SK-N-SH (cell line): ENCODE measurements at regions of chr15 and their contacts with region 1.

Region 1: GRCh38 chr15:92808978-92809879 is 90.9 kb upstream of the CHD2 start:
- DNase-seq: peak; percentile 94
- H3K4me3 ChIP-seq: peak overlapping the region; percentile 40 to 41; a peak in 3 of 4 replicates
- H3K27ac ChIP-seq: peak overlapping the region; percentile 81 to 88
- H3K4me1 ChIP-seq: no peaks in the 10 kb centered on the region; a peak in 1 of 4 replicates
- H3K27me3 ChIP-seq: no peaks in the 10 kb centered on the region
- CTCF ChIP-seq: peak; percentile 77
- EP300 ChIP-seq: peak; percentile 18 to 20; a peak in 2 of 4 replicates
- RAD21 ChIP-seq: peak; percentile 78

Region 2: GRCh38 chr15:92820236-92821021 is 11.2 kb after region 1 on chr15:
- CTCF ChIA-PET with region 1: interaction called, 41 read pairs
- POLR2A ChIA-PET with region 1: interaction called, 27 read pairs
- DNase-seq: peak; percentile 96
- H3K4me3 ChIP-seq: peak overlapping the region; percentile 38 to 58
- H3K27ac ChIP-seq: peak overlapping the region; percentile 78 to 98
- H3K4me1 ChIP-seq: peaks cover 21 to 40% of the 10 kb centered on the region in 2 experiments
- H3K27me3 ChIP-seq: no peaks in the 10 kb centered on the region
- CTCF ChIP-seq: no peak
- EP300 ChIP-seq: peak; percentile 32 to 35; a peak in 2 of 4 replicates
- RAD21 ChIP-seq: peak; percentile 24

Region 3: GRCh38 chr15:92881802-92882696 is 72.8 kb after region 1 on chr15:
- CTCF ChIA-PET with region 1: interaction called, 18 read pairs
- POLR2A ChIA-PET with region 1: interaction called, 63 read pairs
- DNase-seq: peak; percentile 98
- H3K4me3 ChIP-seq: peak overlapping the region; percentile 45 to 61
- H3K27ac ChIP-seq: peak overlapping the region; percentile 78 to 88
- H3K4me1 ChIP-seq: peaks cover 16 to 19% of the 10 kb centered on the region in 2 experiments; a peak in 3 of 4 replicates
- H3K27me3 ChIP-seq: no peaks in the 10 kb centered on the region
- CTCF ChIP-seq: no peak
- EP300 ChIP-seq: no peak; a peak in 1 of 4 replicates
- RAD21 ChIP-seq: no peak; the same call in 1 of the 2 replicates

Region 4: GRCh38 chr15:92917606-92918407 is 108.6 kb after region 1 on chr15:
- CTCF ChIA-PET with region 1: interaction called, 16 read pairs
- POLR2A ChIA-PET with region 1: interaction called, 10 read pairs
- DNase-seq: peak; percentile 76
- H3K4me3 ChIP-seq: no peak overlapping the region; a peak in 1 of 4 replicates
- H3K27ac ChIP-seq: peak overlapping the region; percentile 88 to 90
- H3K4me1 ChIP-seq: peaks cover 9 to 41% of the 10 kb centered on the region in 2 experiments
- H3K27me3 ChIP-seq: no peaks in the 10 kb centered on the region
- CTCF ChIP-seq: peak; percentile 94
- EP300 ChIP-seq: 0 out of 4 replicates have a peak, but pooled peaks of 1 of the 2 experiments have one; percentile 1
- RAD21 ChIP-seq: peak; percentile 84